ENCODE measurements at regions of chr2 and their contacts with region 1.

Region 1: DNA sequence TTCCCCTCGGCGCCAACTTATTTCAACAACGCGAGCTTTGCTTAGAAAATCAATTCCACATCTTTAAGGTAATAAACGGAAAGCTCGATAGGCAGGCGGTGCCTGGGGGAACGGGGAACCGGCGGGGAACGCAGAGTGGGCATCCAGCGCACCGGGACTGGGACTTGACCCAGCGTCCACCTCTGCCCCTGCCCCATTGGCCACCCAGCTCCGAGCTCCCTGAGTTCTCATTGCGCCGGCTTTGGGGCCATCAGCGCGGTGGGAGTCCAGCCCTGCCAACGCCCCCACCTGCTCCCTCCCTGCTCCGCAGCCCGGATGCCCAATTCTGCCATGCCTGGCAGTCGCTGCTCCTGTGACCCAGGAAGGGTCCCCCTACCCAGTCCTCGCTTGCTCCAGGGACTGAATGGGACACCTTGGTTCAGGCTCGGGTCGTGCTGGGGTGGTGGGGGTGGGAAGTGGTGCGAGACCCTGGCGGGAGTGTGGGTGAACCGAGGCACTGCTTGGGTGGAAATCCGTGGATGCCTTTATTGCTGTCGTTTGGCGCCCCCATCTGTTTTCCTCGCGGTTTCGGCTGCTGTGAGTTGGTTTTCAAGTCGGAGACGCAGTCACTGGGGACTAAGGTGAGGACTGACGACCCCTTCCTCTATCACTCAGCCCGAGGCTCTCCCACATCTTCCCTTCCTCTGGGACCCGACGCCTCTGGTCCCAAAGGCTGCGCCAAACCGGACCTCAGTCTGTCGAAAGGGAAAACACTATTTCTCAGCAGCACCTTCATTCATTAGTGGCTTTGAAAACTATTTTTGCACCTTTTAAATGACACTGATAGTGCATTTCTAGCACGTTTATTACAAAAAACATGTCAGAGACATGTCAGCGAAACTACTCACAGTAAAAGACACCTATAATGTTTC is 2.4 kb upstream of the EVX2 start:
- DNase-seq: peak in 1 of 2 experiments; percentile 30
- H3K4me3 ChIP-seq: no peak overlapping the region
- H3K27ac ChIP-seq: no peak overlapping the region
- H3K4me1 ChIP-seq: no peaks in the 10 kb centered on the region
- H3K27me3 ChIP-seq: peaks cover 65% of the 10 kb centered on the region
- CTCF ChIP-seq: peak; percentile 62

Region 2: DNA sequence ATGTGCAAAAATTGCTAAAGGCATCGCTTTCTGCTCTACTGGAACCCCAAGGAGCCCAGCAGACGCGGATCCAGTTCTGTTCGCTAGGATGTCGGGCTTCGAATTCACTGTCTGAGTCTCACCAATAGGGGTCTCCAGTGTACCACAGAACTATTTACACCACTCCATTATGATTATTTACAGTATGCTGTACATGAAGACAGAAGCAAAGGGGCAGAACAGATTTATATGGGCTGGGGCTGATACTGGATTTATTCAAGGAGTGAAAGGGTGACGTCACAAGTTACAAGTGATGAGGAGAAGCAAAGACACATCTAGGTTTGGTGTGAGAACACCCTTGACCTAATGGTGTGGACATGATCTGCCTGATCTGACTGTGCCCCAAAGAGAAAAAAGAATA is 719.3 kb before region 1 on chr2:
- CTCF ChIA-PET with region 1: no interaction called
- POLR2A ChIA-PET with region 1: no interaction called
- intact Hi-C with region 1: loop called (anchors 1 kb)
- DNase-seq: peak in 1 of 2 experiments; percentile 18
- H3K4me3 ChIP-seq: no peak overlapping the region
- H3K27ac ChIP-seq: no peak overlapping the region
- H3K4me1 ChIP-seq: no peaks in the 10 kb centered on the region
- H3K27me3 ChIP-seq: peaks cover 15% of the 10 kb centered on the region
- CTCF ChIP-seq: peak; percentile 89

Region 3: GRCh38 chr2:175414882-175415487 is 671.1 kb before region 1 on chr2:
- CTCF ChIA-PET with region 1: no interaction called
- POLR2A ChIA-PET with region 1: no interaction called
- intact Hi-C with region 1: loop called (anchors 2 kb)
- DNase-seq: peak in 1 of 2 experiments; percentile 47
- H3K4me3 ChIP-seq: no peak overlapping the region
- H3K27ac ChIP-seq: no peak overlapping the region
- H3K4me1 ChIP-seq: no peaks in the 10 kb centered on the region
- H3K27me3 ChIP-seq: peaks cover 5% of the 10 kb centered on the region; the same call in 1 of the 2 replicates
- CTCF ChIP-seq: peak; percentile 87

Region 4: GRCh38 chr2:175690113-175690837 is 395.8 kb before region 1 on chr2:
- CTCF ChIA-PET with region 1: no interaction called
- POLR2A ChIA-PET with region 1: no interaction called
- intact Hi-C with region 1: loop called (anchors 1 kb)
- DNase-seq: peak; percentile 38 to 64
- H3K4me3 ChIP-seq: no peak overlapping the region
- H3K27ac ChIP-seq: no peak overlapping the region
- H3K4me1 ChIP-seq: no peaks in the 10 kb centered on the region
- H3K27me3 ChIP-seq: peaks cover 31% of the 10 kb centered on the region
- CTCF ChIP-seq: peak; percentile 94

Region 5: DNA sequence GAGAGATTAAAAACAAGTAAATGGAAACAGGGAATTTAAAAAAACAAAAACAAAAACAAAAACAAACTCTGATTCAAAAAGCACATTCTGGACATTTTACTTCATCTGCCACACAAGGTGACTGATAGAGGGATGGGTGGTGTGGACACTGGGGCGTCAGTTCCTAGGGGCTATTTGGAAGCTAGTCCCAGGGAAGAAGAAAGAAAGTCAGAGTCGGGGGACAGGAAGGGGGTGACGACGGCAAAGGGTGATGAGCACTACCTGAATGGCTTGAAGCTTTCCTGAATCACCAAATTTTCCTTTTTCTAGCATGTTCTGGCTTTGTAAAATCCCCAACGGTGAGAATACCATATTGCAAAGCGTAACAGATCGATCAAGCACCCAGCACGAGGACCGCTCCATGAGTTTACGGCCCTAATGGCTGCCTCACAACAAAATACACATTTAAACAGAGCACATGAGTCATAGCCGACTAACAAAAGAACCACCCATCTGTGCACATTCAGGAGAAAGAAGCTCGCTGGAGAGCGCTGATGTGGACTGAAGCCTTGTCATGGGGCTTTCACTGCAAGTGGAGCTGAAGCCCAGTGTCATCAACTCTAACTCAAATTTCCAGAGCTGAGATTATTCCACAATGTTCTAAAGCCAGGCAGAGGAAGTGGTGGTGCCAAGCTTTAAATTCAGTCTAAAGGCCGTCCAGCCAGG is 263.0 kb before region 1 on chr2:
- CTCF ChIA-PET with region 1: no interaction called
- POLR2A ChIA-PET with region 1: no interaction called
- intact Hi-C with region 1: no loop called
- DNase-seq: no peak
- H3K4me3 ChIP-seq: no peak overlapping the region
- H3K27ac ChIP-seq: no peak overlapping the region
- H3K4me1 ChIP-seq: no peaks in the 10 kb centered on the region
- H3K27me3 ChIP-seq: peaks cover 49% of the 10 kb centered on the region
- CTCF ChIP-seq: no peak

Region 6: DNA sequence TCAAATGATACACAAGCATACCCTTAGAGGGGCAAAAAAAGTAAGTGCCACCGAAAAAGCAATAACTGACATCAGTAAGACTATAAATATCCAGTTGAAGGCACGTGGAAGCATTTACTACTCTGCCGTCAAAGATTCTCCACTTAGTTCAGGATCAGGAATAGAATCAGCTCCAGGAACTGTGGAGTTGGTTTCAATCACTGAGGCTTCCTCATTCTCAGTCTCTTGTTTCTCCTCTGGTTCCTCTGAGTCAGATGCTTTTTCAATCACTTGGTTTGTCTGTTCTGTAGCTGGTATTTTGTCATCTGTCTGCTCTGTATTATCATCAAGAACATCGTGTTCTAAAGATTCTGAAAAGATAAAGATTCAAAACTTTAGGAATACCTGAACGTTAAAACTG is 156.3 kb before region 1 on chr2:
- CTCF ChIA-PET with region 1: no interaction called
- POLR2A ChIA-PET with region 1: no interaction called
- intact Hi-C with region 1: no loop called
- DNase-seq: peak; percentile 14 to 39
- H3K4me3 ChIP-seq: no peak overlapping the region
- H3K27ac ChIP-seq: no peak overlapping the region
- H3K4me1 ChIP-seq: peaks cover 18% of the 10 kb centered on the region
- H3K27me3 ChIP-seq: no peaks in the 10 kb centered on the region
- CTCF ChIP-seq: no peak

Region 7: DNA sequence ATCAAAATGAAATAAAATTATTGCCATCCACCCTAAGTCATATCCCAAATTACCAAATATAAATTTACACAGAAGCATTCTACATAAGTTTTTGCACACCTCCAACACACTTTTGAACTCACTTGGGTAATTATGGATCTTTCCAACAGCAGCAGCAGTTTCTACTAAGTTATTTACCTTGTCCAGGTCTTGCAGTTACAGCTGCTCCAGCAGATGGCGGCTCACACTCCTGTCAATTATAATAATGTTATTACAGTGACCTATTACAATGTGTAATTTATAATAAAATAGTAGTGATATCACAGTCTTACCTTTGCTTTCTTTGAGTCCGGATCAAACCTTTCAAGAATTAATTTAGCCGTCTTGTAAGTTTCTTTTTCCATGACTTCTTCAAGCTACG is 121.9 kb before region 1 on chr2:
- CTCF ChIA-PET with region 1: no interaction called
- POLR2A ChIA-PET with region 1: no interaction called
- intact Hi-C with region 1: loop called (anchors 2 kb)
- DNase-seq: no peak
- H3K4me3 ChIP-seq: no peak overlapping the region
- H3K27ac ChIP-seq: no peak overlapping the region
- H3K4me1 ChIP-seq: no peaks in the 10 kb centered on the region
- H3K27me3 ChIP-seq: no peaks in the 10 kb centered on the region
- CTCF ChIP-seq: peak; percentile 57

Measured in PC-9 (cell line).